Panc1 (cell line): ENCODE measurements at regions of chr7 and their contacts with region 1.

Region 1: GRCh38 chr7:50369143-50370026 is 64.9 kb downstream of the IKZF1 start:
- DNase-seq: peak; percentile 24
- ATAC-seq: no peak
- H3K4me3 ChIP-seq: no peak overlapping the region
- H3K27ac ChIP-seq: no peak overlapping the region
- H3K4me1 ChIP-seq: no peaks in the 10 kb centered on the region
- H3K27me3 ChIP-seq: peaks cover 2% of the 10 kb centered on the region; the same call in 1 of the 2 replicates
- CTCF ChIP-seq: peak; percentile 76

Region 2: GRCh38 chr7:49580761-49581160 is 788.6 kb before region 1 on chr7:
- CTCF ChIA-PET with region 1: no interaction called
- POLR2A ChIA-PET with region 1: no interaction called
- in situ Hi-C with region 1: no loop called
- intact Hi-C with region 1: no loop called
- DNase-seq: no peak
- ATAC-seq: no peak
- H3K4me3 ChIP-seq: no peak overlapping the region
- H3K27ac ChIP-seq: no peak overlapping the region
- H3K4me1 ChIP-seq: no peaks in the 10 kb centered on the region
- H3K27me3 ChIP-seq: no peaks in the 10 kb centered on the region
- CTCF ChIP-seq: no peak

Region 3: GRCh38 chr7:50142425-50143017 is 226.9 kb before region 1 on chr7:
- CTCF ChIA-PET with region 1: interaction called, 3 read pairs
- POLR2A ChIA-PET with region 1: no interaction called
- in situ Hi-C with region 1: no loop called
- intact Hi-C with region 1: loop called (anchors 2 kb)
- DNase-seq: no peak
- ATAC-seq: no peak; the same call in 1 of the 2 replicates
- H3K4me3 ChIP-seq: no peak overlapping the region
- H3K27ac ChIP-seq: no peak overlapping the region
- H3K4me1 ChIP-seq: no peaks in the 10 kb centered on the region
- H3K27me3 ChIP-seq: 0 out of 2 replicates have a peak, but pooled peaks cover 2% of the 10 kb centered on the region
- CTCF ChIP-seq: peak; percentile 82; the same call in 1 of the 2 replicates

Region 4: DNA sequence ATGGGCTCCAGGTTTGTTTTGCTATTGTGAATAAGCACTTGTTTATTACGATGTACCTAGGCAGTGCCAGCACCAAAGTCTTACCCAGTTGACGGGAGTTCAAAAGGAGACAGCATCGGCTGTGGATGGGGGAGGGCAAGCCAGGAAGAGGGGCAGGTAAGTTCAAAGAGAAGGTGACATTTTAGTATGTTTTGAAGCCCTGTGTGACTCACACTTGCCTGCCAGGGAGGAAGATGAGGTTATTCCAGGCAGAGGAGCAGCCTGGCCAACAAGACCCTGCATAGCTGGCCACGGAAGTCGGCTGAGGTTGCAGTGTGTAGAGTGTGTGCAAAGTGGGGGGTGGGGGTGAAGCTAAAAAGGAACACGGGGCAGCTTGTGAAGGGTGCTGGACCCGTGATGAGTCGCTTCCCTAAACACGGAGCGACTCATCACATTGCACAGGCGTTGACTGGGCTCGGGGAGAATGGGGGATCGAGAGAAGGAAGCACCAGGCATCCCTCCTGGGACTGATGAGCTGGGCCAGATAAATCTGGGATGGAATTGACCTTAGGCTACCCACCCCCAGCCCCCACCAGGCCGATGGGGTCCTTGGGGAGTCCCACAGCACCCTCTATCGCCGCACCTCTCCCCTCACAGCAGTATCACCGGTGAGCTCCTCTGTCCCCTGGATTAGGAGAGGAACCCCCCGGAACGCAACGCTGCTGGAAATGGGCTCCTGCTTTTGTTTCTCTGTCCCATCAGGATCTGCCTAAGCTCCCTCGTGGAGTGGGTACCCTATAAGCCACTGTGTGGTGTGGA is 162.7 kb before region 1 on chr7:
- CTCF ChIA-PET with region 1: interaction called, 4 read pairs
- POLR2A ChIA-PET with region 1: no interaction called
- in situ Hi-C with region 1: no loop called
- intact Hi-C with region 1: loop called (anchors 1 kb)
- DNase-seq: no peak
- ATAC-seq: no peak
- H3K4me3 ChIP-seq: no peak overlapping the region
- H3K27ac ChIP-seq: no peak overlapping the region
- H3K4me1 ChIP-seq: no peaks in the 10 kb centered on the region
- H3K27me3 ChIP-seq: no peaks in the 10 kb centered on the region; the same call in 1 of the 2 replicates
- CTCF ChIP-seq: no peak